Activated B cell treated with CpG ODN at 0.5 μM for 24 hours (primary cell): ENCODE measurements at regions of chr20 and their contacts with region 1.

Region 1: GRCh38 chr20:43749734-43750294 is 23.0 kb upstream of the GTSF1L start:
- DNase-seq: peak; percentile 90
- ATAC-seq: peak; percentile 19
- H3K4me3 Mint-ChIP-seq: no peak overlapping the region
- H3K27ac Mint-ChIP-seq: peak overlapping the region; percentile 51
- H3K4me1 Mint-ChIP-seq: peaks cover 44% of the 10 kb centered on the region
- H3K27me3 Mint-ChIP-seq: no peaks in the 10 kb centered on the region
- CTCF ChIP-seq: peak; percentile 76

Region 2: GRCh38 chr20:43537921-43538877 is 211.6 kb before region 1 on chr20:
- CTCF ChIA-PET with region 1: interaction called, 12 read pairs
- POLR2A ChIA-PET with region 1: interaction called, 3 read pairs
- intact Hi-C with region 1: no loop called
- DNase-seq: peak; percentile 30
- ATAC-seq: peak; percentile 65
- H3K4me3 Mint-ChIP-seq: no peak overlapping the region
- H3K27ac Mint-ChIP-seq: no peak overlapping the region
- H3K4me1 Mint-ChIP-seq: no peaks in the 10 kb centered on the region
- H3K27me3 Mint-ChIP-seq: no peaks in the 10 kb centered on the region
- CTCF ChIP-seq: peak; percentile 52

Region 3: DNA sequence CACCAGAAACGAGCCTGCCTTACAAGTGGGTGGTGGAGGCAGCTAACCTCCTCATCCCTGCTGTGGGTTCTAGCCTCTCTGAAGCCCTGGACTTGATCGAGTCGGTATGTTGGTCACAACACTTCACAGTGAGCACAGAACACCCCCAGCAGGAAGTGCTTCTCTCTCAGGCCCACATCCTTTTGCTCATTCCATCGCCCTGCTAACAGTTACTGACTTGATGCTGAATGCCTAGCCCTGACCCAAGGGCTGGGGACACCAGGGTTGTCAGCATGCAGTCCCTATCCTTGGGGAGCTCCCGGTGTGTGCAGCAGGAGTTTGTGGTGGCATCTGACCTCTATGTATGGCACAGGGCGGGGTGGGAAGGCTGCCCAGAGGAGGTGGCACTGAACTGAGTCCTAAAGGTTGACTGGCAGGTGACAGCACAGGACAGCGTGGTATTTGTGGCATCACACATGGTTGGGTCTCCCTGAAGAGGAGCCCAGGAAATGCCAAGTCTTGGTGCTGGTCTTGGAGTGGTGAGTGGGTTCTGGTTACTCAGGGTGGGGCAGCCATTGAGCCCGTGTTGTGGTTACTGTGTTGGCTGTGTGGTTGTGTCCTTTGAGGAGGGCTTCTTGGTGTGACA is 49.8 kb before region 1 on chr20:
- CTCF ChIA-PET with region 1: no interaction called
- POLR2A ChIA-PET with region 1: no interaction called
- intact Hi-C with region 1: no loop called
- DNase-seq: no peak
- ATAC-seq: no peak
- H3K4me3 Mint-ChIP-seq: no peak overlapping the region
- H3K27ac Mint-ChIP-seq: no peak overlapping the region
- H3K4me1 Mint-ChIP-seq: no peaks in the 10 kb centered on the region
- H3K27me3 Mint-ChIP-seq: no peaks in the 10 kb centered on the region
- CTCF ChIP-seq: no peak

Region 4: DNA sequence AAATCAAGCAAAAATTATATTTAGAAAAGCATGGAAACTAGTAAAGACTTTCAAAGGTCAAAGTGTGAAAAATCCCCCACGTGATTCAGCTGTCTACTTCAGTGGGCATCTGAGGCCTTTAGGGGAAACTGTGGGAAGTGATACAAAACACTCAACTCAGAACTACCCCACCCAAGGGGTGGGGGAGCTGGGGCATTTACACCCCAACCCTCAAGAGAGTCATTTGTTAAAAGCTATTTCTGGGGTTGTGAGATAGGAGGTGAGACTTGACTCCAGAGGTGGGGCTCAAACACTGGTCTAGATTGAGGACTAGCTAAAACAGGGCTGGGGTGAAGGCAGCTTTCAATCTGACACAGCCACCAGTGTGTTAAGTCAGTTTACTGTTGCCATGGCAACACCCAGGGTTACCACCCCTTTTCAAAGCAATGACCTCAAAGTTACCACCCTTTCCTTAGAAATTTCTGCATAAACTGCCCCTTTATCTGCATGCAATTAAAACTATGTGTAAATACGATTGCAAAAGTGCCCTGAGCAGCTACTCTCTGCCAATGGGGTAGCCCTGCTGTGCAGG is 13.1 kb before region 1 on chr20:
- CTCF ChIA-PET with region 1: interaction called, 18 read pairs
- POLR2A ChIA-PET with region 1: interaction called, 12 read pairs
- intact Hi-C with region 1: loop called (anchors 1 kb)
- DNase-seq: no peak
- ATAC-seq: peak; percentile 83
- H3K4me3 Mint-ChIP-seq: peak overlapping the region; percentile 35
- H3K27ac Mint-ChIP-seq: peak overlapping the region; percentile 62
- H3K4me1 Mint-ChIP-seq: peaks cover 44% of the 10 kb centered on the region
- H3K27me3 Mint-ChIP-seq: no peaks in the 10 kb centered on the region
- CTCF ChIP-seq: no peak

Region 5: DNA sequence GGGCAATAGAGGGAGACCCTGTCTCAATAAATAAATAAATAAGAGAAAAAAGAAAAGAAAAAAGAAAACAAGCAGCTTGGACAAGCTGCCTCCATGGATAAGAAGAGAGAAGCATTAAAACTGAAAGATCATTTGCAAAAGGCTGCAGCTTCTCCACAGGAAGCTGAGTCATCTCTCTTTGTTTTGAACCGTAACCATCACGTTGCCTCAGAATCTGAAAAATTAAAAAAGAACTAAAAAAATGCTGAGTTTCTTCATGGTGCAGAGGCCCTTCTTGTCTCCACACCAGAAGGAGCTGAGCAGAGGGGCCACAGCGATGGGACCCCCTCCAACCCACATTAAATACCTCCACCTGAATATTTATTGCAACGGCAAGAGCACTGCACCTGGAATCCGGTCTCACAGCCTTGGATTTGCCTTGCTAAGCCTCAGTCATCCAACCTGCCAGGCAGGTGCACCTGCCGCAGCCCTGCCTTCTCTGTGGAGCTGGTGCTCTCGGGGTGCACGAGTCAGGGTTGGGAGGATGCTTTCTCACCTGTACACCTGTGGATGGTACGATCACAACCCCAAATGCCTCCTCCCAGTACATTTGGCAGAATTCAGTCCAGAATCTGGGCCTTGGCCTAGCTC is 193.0 kb after region 1 on chr20:
- CTCF ChIA-PET with region 1: interaction called, 8 read pairs
- POLR2A ChIA-PET with region 1: interaction called, 10 read pairs
- intact Hi-C with region 1: no loop called
- DNase-seq: no peak
- ATAC-seq: peak; percentile 63
- H3K4me3 Mint-ChIP-seq: peak overlapping the region; percentile 33
- H3K27ac Mint-ChIP-seq: peak overlapping the region; percentile 84
- H3K4me1 Mint-ChIP-seq: peaks cover 23% of the 10 kb centered on the region
- H3K27me3 Mint-ChIP-seq: no peaks in the 10 kb centered on the region
- CTCF ChIP-seq: no peak

Region 6: DNA sequence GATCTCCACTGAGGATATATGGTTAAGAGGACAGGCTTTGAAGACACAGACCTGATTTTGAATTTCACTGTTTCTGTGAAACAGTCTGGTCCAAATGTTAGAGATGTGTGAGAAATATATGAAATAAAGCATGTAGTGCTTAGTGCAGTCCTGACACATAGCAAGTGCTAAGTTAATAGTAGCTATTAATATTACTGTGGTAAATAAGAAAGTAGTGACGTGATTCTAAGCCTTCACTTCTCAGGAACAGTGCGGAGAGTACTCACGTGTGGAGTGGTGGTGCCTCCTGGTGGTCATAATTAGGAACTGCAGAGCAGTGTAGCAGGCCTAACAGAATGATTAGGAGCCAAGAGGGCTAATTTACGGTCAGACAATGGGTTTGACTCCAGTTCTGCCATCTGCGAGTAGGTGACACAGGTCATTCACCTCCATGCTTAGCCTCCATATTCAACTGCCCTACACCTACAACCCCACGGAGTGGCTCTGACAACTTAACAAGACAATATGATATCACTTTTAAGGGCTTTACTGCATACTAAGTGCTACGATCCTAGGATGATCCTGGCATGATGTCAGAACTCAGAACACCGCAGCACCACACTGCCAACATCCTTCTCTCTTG is 330.9 kb after region 1 on chr20:
- CTCF ChIA-PET with region 1: interaction called, 91 read pairs
- POLR2A ChIA-PET with region 1: interaction called, 12 read pairs
- intact Hi-C with region 1: loop called (anchors 1 kb)
- DNase-seq: peak; percentile 52
- ATAC-seq: peak; percentile 99
- H3K4me3 Mint-ChIP-seq: no peak overlapping the region
- H3K27ac Mint-ChIP-seq: no peak overlapping the region
- H3K4me1 Mint-ChIP-seq: peaks cover 4% of the 10 kb centered on the region
- H3K27me3 Mint-ChIP-seq: no peaks in the 10 kb centered on the region
- CTCF ChIP-seq: peak; percentile 56

Region 7: GRCh38 chr20:44370639-44371220 is 620.9 kb after region 1 on chr20:
- CTCF ChIA-PET with region 1: no interaction called
- POLR2A ChIA-PET with region 1: no interaction called
- intact Hi-C with region 1: no loop called
- DNase-seq: no peak
- ATAC-seq: no peak
- H3K4me3 Mint-ChIP-seq: no peak overlapping the region
- H3K27ac Mint-ChIP-seq: no peak overlapping the region
- H3K4me1 Mint-ChIP-seq: no peaks in the 10 kb centered on the region
- H3K27me3 Mint-ChIP-seq: peaks cover 5% of the 10 kb centered on the region
- CTCF ChIP-seq: no peak